Calu3 (cell line): ENCODE measurements at regions of chr6 and their contacts with region 1.

Region 1: DNA sequence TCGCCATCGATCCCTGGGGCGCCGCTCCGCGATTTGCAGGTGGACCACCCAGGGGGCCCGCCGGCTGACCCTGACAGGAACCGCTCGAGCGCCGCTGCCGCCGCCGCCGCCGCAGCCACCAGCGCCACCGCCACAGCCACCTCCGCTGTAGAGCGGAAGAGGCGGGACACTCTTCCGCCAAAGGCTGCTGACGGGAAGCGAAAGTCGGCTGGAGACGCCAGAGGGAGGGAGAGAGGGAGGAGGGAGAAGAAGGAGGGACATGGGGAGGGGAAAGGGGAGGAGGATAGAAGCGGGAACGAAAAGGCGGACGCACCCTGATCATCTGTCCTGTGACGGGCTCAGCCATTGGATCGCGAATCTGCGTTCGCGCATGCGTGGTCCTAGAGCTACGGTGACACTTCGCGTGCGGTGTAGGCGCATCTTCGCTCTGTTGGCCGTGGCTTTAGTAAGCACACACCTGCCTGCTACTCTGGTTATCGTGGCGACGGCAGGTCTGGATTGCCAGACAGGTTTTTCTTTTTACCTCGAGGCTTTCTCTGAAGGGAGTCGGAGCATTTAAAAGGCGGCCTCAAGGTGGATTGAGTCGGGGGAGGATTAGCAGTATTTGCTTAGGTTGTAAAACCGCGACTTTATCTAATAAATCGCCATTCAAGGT is at the start of gene TMEM30A:
- DNase-seq: peak; percentile 96
- H3K4me3 Mint-ChIP-seq: no peak within 1 kb of the TSS
- H3K27ac Mint-ChIP-seq: no peak within 1 kb of the TSS
- H3K4me1 Mint-ChIP-seq: peaks cover 13% of the 10 kb centered on the region
- H3K27me3 Mint-ChIP-seq: no peaks in the 10 kb centered on the region
- CTCF ChIP-seq: no peak
- total RNA-seq, gene TMEM30A: 105 and 141 TPM in 2 replicates

Region 2: GRCh38 chr6:75230484-75231325 is 54.1 kb before region 1 on chr6:
- CTCF ChIA-PET with region 1: no interaction called
- intact Hi-C with region 1: no loop called
- DNase-seq: peak; percentile 51
- H3K4me3 Mint-ChIP-seq: no peak overlapping the region
- H3K27ac Mint-ChIP-seq: no peak overlapping the region
- H3K4me1 Mint-ChIP-seq: no peaks in the 10 kb centered on the region
- H3K27me3 Mint-ChIP-seq: no peaks in the 10 kb centered on the region
- CTCF ChIP-seq: peak; percentile 59

Region 3: DNA sequence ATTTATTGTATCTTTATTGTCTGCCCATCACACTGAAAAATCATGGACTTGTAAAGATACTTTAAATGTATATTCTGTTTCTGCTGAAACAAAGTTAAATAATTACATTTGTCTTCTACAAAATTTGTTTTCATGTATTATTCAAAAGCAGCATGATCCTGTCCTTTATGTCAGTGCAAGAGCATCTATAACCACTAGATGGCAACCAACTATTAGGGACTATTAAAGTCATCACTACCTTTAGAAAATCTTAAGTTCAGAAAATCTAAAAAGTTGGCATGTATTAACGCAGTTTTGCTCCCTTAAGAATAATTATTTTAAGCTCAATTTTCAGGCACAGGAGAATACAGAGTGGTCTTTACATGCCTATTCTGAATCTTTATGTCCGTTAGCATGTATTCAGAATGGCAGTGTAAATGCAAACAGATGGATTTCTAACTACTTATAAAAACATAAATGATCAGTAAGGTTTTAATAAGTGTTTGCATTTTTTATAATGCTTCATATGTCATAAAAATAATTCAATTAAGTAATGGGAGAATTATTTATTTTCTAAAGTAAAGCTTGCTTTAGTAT is 18.0 kb before region 1 on chr6:
- CTCF ChIA-PET with region 1: interaction called, 5 read pairs
- intact Hi-C with region 1: loop called (anchors 2 kb)
- DNase-seq: no peak
- H3K4me3 Mint-ChIP-seq: no peak overlapping the region
- H3K27ac Mint-ChIP-seq: no peak overlapping the region
- H3K4me1 Mint-ChIP-seq: peaks cover 14% of the 10 kb centered on the region
- H3K27me3 Mint-ChIP-seq: no peaks in the 10 kb centered on the region
- CTCF ChIP-seq: peak; percentile 62

Region 4: GRCh38 chr6:75458895-75459294 is 174.1 kb after region 1 on chr6:
- CTCF ChIA-PET with region 1: no interaction called
- intact Hi-C with region 1: no loop called
- DNase-seq: no peak
- H3K4me3 Mint-ChIP-seq: no peak overlapping the region
- H3K27ac Mint-ChIP-seq: no peak overlapping the region
- H3K4me1 Mint-ChIP-seq: no peaks in the 10 kb centered on the region
- H3K27me3 Mint-ChIP-seq: no peaks in the 10 kb centered on the region
- CTCF ChIP-seq: no peak